MCF 10A (cell line): ENCODE measurements at regions of chr2 and their contacts with region 1.

Region 1: GRCh38 chr2:232568161-232568560 is 17.7 kb downstream of the EIF4E2 start:
- DNase-seq: peak; percentile 89
- H3K4me3 Mint-ChIP-seq: peak overlapping the region; percentile 23
- H3K27ac Mint-ChIP-seq: peak overlapping the region; percentile 68
- H3K4me1 Mint-ChIP-seq: peaks cover 19% of the 10 kb centered on the region
- H3K27me3 Mint-ChIP-seq: no peaks in the 10 kb centered on the region
- CTCF ChIP-seq: no peak

Region 2: GRCh38 chr2:232133078-232133477 is 435.1 kb before region 1 on chr2:
- CTCF ChIA-PET with region 1: no interaction called
- POLR2A ChIA-PET with region 1: no interaction called
- intact Hi-C with region 1: no loop called
- DNase-seq: no peak
- H3K4me3 Mint-ChIP-seq: no peak overlapping the region
- H3K27ac Mint-ChIP-seq: no peak overlapping the region
- H3K4me1 Mint-ChIP-seq: no peaks in the 10 kb centered on the region
- H3K27me3 Mint-ChIP-seq: no peaks in the 10 kb centered on the region
- CTCF ChIP-seq: no peak

Region 3: DNA sequence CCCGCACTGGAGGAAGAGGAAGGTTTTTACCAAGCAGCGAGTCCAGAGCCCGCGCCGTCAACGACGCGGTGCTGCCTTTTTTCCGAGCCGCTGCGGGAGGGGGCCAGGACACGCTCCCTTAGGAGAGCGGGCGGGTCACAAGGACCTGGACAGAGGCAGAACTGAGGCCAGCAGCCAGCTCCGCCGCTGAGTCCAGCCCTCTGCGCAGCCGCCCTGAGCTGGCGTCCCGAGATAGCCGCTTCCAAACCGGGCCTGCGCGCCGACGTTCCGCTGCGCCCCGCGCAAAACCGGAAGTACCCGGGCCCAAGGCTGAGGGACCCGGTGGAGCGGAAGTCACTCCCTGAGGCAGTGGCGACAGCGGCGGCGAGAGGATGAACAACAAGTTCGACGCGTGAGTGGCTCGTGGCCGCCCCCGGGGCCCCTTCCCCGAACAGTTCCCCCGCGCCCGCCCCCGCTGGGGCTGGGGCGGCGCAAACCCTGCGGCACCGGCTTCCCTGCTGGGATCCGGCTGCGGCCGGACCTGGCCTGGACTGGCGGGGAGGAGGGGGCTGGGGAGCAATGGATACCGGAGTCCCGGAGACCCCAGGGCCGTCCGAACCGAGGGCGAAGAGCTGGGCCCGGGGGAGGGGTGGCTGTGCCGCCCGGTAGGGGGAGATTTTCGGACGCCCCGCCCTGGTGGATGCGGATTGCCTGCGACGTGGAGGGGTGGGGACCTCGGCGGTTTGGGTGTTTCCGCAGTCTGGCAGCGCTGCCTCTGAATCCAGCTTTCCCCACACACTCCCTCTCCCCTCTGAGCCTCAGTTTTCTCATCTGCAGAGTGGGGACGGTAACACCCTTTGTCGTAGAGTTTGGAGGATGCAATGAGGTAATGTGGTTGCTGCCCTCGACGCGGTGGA is 17.6 kb before region 1 on chr2 and contains the starts of genes EIF4E2 and TIGD1:
- CTCF ChIA-PET with region 1: interaction called, 5 read pairs
- POLR2A ChIA-PET with region 1: interaction called, 39 read pairs
- intact Hi-C with region 1: no loop called
- DNase-seq: peak; percentile 87
- H3K4me3 Mint-ChIP-seq: peak within 1 kb of the TSS; percentile 90
- H3K27ac Mint-ChIP-seq: peak within 1 kb of the TSS; percentile 96
- H3K4me1 Mint-ChIP-seq: peaks cover 30% of the 10 kb centered on the region
- H3K27me3 Mint-ChIP-seq: no peaks in the 10 kb centered on the region
- CTCF ChIP-seq: no peak
- total RNA-seq, gene EIF4E2: 51.7 and 52.8 TPM in 2 replicates
- total RNA-seq, gene TIGD1: 4.9 and 5.2 TPM in 2 replicates

Region 4: DNA sequence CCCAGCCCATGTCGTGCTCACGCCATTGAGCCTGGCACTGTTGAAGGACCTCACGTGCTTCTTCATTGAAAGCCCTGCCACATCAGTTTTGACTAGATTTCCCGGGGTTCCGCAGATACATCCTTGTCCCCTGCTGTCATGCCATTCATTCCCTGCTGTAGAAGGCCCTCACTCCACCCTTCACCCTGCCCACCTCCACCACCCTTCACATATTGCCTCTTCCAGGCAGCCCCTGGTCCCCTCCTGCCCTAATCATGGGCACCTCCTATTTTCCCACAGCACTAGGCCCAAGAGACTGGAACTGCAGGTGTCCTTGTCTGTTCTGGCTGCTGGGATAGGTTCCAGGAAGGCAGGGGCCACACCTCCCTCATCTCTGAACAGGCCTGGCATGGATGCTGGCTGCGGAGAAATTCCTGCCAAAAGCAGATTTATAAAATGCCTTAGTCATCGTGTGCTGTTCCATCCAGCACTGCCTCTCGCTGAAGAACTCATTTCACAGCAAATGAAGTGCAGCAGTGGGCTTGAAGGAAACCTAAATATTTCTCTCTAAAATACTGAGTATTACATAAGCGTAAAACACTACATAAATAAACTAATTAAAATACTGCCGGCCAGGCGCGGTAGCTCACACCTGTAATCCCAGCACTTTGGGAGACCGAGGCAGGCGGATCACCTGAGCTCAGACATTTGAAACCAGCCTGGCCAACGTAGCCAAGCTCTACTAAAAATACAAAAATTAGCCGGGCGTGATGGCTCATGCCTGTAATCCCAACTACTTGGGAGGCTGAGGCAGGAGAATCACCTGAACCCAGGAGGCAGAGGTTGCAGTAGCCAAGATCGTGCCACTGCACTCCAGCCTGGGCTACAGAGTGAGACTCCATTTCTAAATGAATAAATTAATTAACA is 20.8 kb after region 1 on chr2:
- CTCF ChIA-PET with region 1: interaction called, 4 read pairs
- POLR2A ChIA-PET with region 1: interaction called, 49 read pairs
- intact Hi-C with region 1: loop called (anchors 2 kb)
- DNase-seq: peak; percentile 90
- H3K4me3 Mint-ChIP-seq: no peak overlapping the region
- H3K27ac Mint-ChIP-seq: peak overlapping the region; percentile 61
- H3K4me1 Mint-ChIP-seq: peaks cover 23% of the 10 kb centered on the region
- H3K27me3 Mint-ChIP-seq: no peaks in the 10 kb centered on the region
- CTCF ChIP-seq: no peak

Region 5: DNA sequence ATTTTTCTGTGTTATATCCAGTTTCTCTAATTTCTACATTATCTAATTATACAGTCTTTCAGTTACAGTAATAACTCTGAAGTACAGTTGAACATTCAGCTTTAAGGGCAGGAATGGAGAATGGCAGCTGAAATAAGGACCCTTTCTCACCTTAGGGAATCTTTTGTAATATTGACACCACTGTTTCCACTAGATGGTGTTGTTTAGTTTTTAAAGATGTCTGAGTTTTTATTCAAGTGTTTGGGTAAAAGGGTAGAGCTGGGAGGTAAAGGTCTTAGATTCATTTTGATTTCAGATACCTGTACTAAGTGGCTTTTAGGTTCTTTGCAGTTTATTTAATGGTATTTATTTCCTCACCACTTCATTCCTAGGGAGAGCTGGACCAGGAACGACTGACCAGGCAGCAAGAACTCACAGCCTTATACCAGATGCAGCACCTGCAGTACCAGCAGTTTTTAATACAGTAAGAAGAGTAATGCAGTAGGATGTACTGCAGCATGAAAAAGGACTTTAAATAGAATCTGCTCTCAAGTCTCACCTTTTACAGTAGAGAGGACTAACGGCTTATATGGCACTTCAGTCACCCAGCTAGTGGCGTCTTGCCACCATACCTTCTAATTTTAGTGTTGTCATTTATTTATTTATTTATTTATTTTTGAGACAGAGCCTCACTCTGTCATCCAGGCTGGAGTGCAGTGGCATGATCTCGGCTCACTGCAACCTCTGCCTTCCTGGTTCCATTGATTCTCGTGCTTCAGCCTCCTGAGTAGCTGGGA is 241.4 kb after region 1 on chr2:
- CTCF ChIA-PET with region 1: no interaction called
- POLR2A ChIA-PET with region 1: no interaction called
- intact Hi-C with region 1: no loop called
- DNase-seq: no peak
- H3K4me3 Mint-ChIP-seq: no peak overlapping the region
- H3K27ac Mint-ChIP-seq: no peak overlapping the region
- H3K4me1 Mint-ChIP-seq: no peaks in the 10 kb centered on the region
- H3K27me3 Mint-ChIP-seq: no peaks in the 10 kb centered on the region
- CTCF ChIP-seq: no peak